MCF 10A (cell line): ENCODE measurements at regions of chr5 and their contacts with region 1.

Region 1: DNA sequence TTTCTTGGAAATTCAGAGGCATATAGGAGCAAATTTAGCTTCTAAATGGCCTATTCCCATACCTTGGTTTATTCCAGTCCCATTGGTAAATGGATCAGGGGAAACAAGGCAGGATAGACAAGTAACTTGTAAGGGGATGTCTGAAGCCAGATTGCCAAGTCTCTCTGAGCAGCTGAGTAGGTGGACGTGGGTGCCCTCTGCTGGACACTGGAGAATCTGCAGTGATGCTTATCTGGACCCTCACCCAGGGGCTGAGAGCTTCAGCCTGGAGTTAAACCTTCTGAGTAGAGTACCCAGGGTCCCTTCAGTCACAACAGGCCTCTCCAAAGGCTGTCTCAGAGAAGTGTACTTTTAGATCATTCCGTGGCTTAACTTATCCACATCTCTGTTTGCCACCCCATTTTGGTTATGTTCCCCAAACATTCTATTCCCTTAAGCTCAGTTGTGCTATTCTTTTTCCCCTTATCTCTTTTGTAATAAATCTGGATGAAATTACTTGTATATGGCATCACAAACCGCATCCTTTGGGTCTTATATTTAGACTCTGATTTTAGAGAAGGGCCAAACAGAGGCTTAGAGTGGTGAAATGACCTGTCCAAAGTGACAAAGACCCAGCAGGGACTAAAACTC is 218.3 kb upstream of the GLRA1 start:
- DNase-seq: peak; percentile 75
- H3K4me3 Mint-ChIP-seq: no peak overlapping the region
- H3K27ac Mint-ChIP-seq: no peak overlapping the region
- H3K4me1 Mint-ChIP-seq: no peaks in the 10 kb centered on the region
- H3K27me3 Mint-ChIP-seq: peaks cover 26% of the 10 kb centered on the region
- CTCF ChIP-seq: peak; percentile 99

Region 2: GRCh38 chr5:151093476-151093889 is 1049.5 kb before region 1 on chr5:
- CTCF ChIA-PET with region 1: no interaction called
- POLR2A ChIA-PET with region 1: no interaction called
- intact Hi-C with region 1: no loop called
- DNase-seq: peak; percentile 98
- H3K4me3 Mint-ChIP-seq: peak overlapping the region; percentile 28
- H3K27ac Mint-ChIP-seq: peak overlapping the region; percentile 76
- H3K4me1 Mint-ChIP-seq: peaks cover 43% of the 10 kb centered on the region
- H3K27me3 Mint-ChIP-seq: no peaks in the 10 kb centered on the region
- CTCF ChIP-seq: no peak

Region 3: DNA sequence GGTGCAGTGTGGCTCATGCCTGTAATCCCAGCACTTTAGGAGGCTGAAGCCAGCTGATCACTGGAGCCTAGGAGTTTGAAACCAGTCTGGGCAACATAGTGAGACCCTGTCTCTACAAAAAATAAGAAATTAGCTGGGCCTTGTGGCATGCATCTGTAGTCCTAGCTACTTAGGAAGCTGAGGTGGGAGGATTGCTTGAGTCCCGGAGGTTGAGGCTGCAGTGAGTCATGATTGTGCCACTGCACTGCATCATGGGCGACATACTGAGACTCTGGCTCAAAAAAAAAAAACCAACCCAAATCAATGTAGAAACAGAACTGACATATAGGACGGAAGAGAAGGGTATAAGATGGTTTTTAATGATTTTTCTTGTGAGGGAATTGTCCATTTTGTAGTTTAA is 343.5 kb before region 1 on chr5:
- CTCF ChIA-PET with region 1: interaction called, 11 read pairs
- POLR2A ChIA-PET with region 1: no interaction called
- intact Hi-C with region 1: no loop called
- DNase-seq: peak; percentile 63
- H3K4me3 Mint-ChIP-seq: no peak overlapping the region
- H3K27ac Mint-ChIP-seq: peak overlapping the region; percentile 28
- H3K4me1 Mint-ChIP-seq: peaks cover 16% of the 10 kb centered on the region
- H3K27me3 Mint-ChIP-seq: no peaks in the 10 kb centered on the region
- CTCF ChIP-seq: no peak

Region 4: GRCh38 chr5:151862811-151863472 is 280.0 kb before region 1 on chr5:
- CTCF ChIA-PET with region 1: interaction called, 17 read pairs
- POLR2A ChIA-PET with region 1: no interaction called
- intact Hi-C with region 1: no loop called
- DNase-seq: no peak
- H3K4me3 Mint-ChIP-seq: no peak overlapping the region
- H3K27ac Mint-ChIP-seq: no peak overlapping the region
- H3K4me1 Mint-ChIP-seq: no peaks in the 10 kb centered on the region
- H3K27me3 Mint-ChIP-seq: no peaks in the 10 kb centered on the region
- CTCF ChIP-seq: no peak

Region 5: DNA sequence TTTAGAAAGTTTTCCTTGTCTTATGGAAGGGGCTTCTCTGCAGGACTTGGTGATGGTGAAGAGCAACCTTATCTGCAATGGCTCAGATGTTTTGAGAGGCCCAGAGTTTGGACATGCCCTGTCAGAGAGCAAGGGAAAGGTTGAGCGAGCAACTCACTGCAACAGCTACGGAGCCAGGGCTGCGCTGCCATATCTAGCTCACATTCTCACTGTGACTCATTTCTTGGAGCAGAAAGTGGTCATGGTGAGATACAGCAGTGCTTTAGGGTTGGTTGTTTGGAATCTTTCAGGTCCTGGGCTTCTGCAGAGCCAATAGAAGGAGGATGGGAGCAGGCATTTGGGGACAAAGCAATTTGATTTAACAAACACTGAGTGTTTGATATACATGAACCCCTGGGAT is 230.6 kb before region 1 on chr5:
- CTCF ChIA-PET with region 1: interaction called, 14 read pairs
- POLR2A ChIA-PET with region 1: no interaction called
- intact Hi-C with region 1: no loop called
- DNase-seq: no peak
- H3K4me3 Mint-ChIP-seq: no peak overlapping the region
- H3K27ac Mint-ChIP-seq: no peak overlapping the region
- H3K4me1 Mint-ChIP-seq: no peaks in the 10 kb centered on the region
- H3K27me3 Mint-ChIP-seq: peaks cover 14% of the 10 kb centered on the region
- CTCF ChIP-seq: no peak

Region 6: DNA sequence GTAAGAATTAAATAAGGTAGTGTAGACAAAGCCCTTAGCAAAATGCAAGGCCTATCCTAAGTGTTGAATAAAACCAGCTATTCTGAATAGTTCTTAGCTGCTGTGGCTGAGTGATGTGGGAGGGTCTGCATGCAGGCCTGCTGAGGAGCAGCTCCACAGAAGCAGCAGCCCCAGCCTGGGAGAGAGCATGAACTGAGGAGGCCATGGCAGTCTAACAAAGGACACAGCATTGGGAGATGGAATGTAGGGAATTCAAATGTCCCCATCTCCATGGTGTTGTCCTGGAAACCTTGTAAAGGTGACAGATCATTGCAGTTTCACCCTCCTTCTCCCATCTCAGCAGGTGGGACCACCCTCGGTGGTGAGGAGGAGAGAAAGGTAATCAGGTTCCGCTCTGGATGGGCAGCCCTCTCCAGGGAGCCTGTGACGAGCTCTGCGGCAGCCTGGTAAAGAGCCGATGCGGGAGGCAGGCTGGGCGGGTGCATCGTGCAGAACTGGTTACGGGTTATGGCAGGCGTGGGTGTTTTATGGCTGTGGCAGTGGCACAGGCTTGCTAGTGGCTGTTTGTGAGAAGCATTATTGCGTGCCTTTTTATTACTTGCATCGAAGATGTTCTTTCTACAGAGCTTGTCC is 18.4 kb before region 1 on chr5:
- CTCF ChIA-PET with region 1: interaction called, 77 read pairs
- POLR2A ChIA-PET with region 1: no interaction called
- intact Hi-C with region 1: no loop called
- DNase-seq: no peak
- H3K4me3 Mint-ChIP-seq: no peak overlapping the region
- H3K27ac Mint-ChIP-seq: no peak overlapping the region
- H3K4me1 Mint-ChIP-seq: no peaks in the 10 kb centered on the region
- H3K27me3 Mint-ChIP-seq: peaks cover 26% of the 10 kb centered on the region
- CTCF ChIP-seq: no peak

Region 7: GRCh38 chr5:152271420-152271819 is 128.5 kb after region 1 on chr5:
- CTCF ChIA-PET with region 1: interaction called, 26 read pairs
- POLR2A ChIA-PET with region 1: no interaction called
- intact Hi-C with region 1: no loop called
- DNase-seq: peak; percentile 59
- H3K4me3 Mint-ChIP-seq: no peak overlapping the region
- H3K27ac Mint-ChIP-seq: no peak overlapping the region
- H3K4me1 Mint-ChIP-seq: peaks cover 6% of the 10 kb centered on the region
- H3K27me3 Mint-ChIP-seq: peaks cover 24% of the 10 kb centered on the region
- CTCF ChIP-seq: peak; percentile 50